H1 (cell line): ENCODE measurements at regions of chr5 and their contacts with region 1.

Region 1: DNA sequence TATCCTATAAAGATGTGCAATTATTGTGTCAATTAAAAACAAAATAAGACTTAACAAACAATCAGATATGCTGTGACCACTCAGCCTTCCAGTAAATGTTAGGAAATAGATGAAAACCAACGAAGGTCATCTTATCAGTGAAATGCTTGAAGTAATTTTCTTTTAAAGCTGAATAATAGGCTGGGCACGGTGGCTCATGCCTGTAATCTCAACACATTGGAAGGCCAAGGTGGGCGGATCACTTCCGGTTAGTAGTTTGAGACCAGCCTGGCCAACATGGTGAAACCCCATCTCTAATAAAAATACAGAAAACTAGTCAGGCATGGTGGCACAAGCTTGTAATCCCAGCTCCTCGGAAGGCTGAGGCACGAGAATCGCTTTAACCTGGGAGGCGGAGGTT is 31.2 kb downstream of the NLN start:
- DNase-seq: no peak
- H3K4me3 ChIP-seq: no peak overlapping the region
- H3K27ac ChIP-seq: no peak overlapping the region
- H3K4me1 ChIP-seq: no peaks in the 10 kb centered on the region
- H3K27me3 ChIP-seq: no peaks in the 10 kb centered on the region
- CTCF ChIP-seq: no peak
- EP300 ChIP-seq: no peak
- POLR2A ChIP-seq: no peak
- RAD21 ChIP-seq: no peak

Region 2: GRCh38 chr5:65695162-65695755 is 57.9 kb before region 1 on chr5:
- CTCF ChIA-PET with region 1: no interaction called
- POLR2A ChIA-PET with region 1: no interaction called
- DNase-seq: no peak
- H3K4me3 ChIP-seq: no peak overlapping the region
- H3K27ac ChIP-seq: no peak overlapping the region
- H3K4me1 ChIP-seq: peaks cover 0 to 7% (median 2%) of the 10 kb centered on the region in 4 experiments; a peak in 2 of 7 replicates
- H3K27me3 ChIP-seq: no peaks in the 10 kb centered on the region
- CTCF ChIP-seq: no peak
- EP300 ChIP-seq: no peak
- POLR2A ChIP-seq: no peak
- RAD21 ChIP-seq: no peak

Region 3: DNA sequence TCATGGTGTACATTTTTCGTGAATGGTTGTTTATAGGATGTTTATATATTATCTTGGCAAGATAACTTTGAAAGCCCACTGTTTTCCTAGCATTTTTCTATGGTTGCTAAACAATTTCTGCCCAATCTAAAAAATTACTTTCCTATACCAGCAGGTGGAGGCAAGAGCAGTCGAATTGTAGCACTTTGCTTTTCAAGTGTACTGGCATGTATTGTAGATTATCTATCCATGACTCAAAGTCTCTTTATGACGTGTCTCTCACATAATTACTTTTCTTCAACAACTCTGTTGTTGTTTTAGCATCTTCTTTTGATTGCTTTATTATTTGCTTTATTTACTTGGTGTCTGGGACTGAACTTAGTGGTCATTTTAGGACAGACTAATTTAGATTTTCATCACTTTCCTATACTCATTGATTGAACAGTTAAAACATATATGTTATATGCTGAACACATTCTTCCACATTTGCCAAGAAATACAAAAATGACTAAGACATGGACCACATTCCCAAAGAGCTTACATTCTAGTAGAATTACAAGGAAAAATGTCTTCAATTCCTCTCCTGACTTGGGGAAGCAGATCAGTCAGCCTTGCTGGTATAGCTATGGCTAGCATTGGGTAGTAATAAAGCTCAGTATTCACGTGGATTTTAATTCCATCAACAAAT is 10.5 kb before region 1 on chr5:
- CTCF ChIA-PET with region 1: interaction called, 10 read pairs
- POLR2A ChIA-PET with region 1: interaction called, 4 read pairs
- DNase-seq: no peak
- H3K4me3 ChIP-seq: no peak overlapping the region
- H3K27ac ChIP-seq: no peak overlapping the region
- H3K4me1 ChIP-seq: no peaks in the 10 kb centered on the region
- H3K27me3 ChIP-seq: peaks cover 0 to 1% (median 0%) of the 10 kb centered on the region in 4 experiments; a peak in 1 of 7 replicates
- CTCF ChIP-seq: peak in 2 of 3 experiments; percentile 15 to 50; a peak in 2 of 4 replicates
- EP300 ChIP-seq: no peak
- POLR2A ChIP-seq: no peak
- RAD21 ChIP-seq: peak; percentile 50 to 52

Region 4: GRCh38 chr5:65779643-65780042 is 26.5 kb after region 1 on chr5:
- CTCF ChIA-PET with region 1: no interaction called
- POLR2A ChIA-PET with region 1: no interaction called
- DNase-seq: no peak
- H3K4me3 ChIP-seq: no peak overlapping the region
- H3K27ac ChIP-seq: no peak overlapping the region
- H3K4me1 ChIP-seq: 0 out of 7 replicates have a peak, but pooled peaks cover 0 to 2% (median 0%) of the 10 kb centered on the region in 4 experiments
- H3K27me3 ChIP-seq: no peaks in the 10 kb centered on the region
- CTCF ChIP-seq: no peak
- EP300 ChIP-seq: no peak
- POLR2A ChIP-seq: no peak
- RAD21 ChIP-seq: no peak